ENCODE measurements at regions of chr7 and their contacts with region 1.

Region 1: GRCh38 chr7:20598459-20599309 is 16.8 kb upstream of the ABCB5 start:
- DNase-seq: peak in 1 of 2 experiments; percentile 53
- H3K4me3 ChIP-seq: no peak overlapping the region
- H3K4me3 Mint-ChIP-seq: no peak overlapping the region
- H3K27ac Mint-ChIP-seq: no peak overlapping the region
- H3K4me1 ChIP-seq: no peaks in the 10 kb centered on the region
- H3K4me1 Mint-ChIP-seq: peaks cover 5% of the 10 kb centered on the region
- H3K27me3 ChIP-seq: no peaks in the 10 kb centered on the region; the same call in 1 of the 2 replicates
- H3K27me3 Mint-ChIP-seq: no peaks in the 10 kb centered on the region
- CTCF ChIP-seq: peak; percentile 68 to 69

Region 2: DNA sequence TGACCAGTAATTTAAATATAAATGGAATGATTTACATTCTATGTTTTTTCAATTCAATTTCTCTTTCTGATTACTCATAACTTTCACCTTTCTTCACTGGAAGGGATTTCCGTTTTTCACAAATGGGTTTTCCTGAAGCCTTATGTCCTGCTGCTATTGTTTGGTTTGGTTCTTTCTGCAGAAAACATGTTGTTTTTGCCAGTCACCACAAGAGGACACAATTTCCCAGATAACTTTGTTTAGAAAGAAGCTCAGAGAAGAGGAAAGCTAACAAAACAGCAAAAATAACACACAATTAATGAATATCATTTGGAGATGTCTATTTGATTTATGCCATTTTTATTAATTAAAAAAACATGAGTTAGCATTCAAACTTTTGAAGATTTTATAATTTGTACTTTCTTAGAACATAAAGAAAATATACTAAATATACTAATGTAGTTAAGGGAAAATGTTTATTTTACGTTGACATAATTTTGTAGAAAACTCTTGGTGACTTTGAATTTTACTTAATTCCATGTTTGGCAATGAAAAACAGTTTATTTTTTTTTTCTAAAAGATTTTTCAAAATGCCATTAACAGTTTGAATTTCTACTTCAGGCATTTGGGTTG is 1476.6 kb before region 1 on chr7:
- CTCF ChIA-PET with region 1: no interaction called
- POLR2A ChIA-PET with region 1: no interaction called
- intact Hi-C with region 1: loop called (anchors 5 kb)
- DNase-seq: peak in 1 of 2 experiments; percentile 12
- H3K4me3 ChIP-seq: no peak overlapping the region
- H3K4me3 Mint-ChIP-seq: no peak overlapping the region
- H3K27ac Mint-ChIP-seq: no peak overlapping the region
- H3K4me1 ChIP-seq: no peaks in the 10 kb centered on the region; the same call in 1 of the 2 replicates
- H3K4me1 Mint-ChIP-seq: no peaks in the 10 kb centered on the region
- H3K27me3 ChIP-seq: no peaks in the 10 kb centered on the region
- H3K27me3 Mint-ChIP-seq: peaks cover 10% of the 10 kb centered on the region
- CTCF ChIP-seq: peak; percentile 50 to 68

Region 3: DNA sequence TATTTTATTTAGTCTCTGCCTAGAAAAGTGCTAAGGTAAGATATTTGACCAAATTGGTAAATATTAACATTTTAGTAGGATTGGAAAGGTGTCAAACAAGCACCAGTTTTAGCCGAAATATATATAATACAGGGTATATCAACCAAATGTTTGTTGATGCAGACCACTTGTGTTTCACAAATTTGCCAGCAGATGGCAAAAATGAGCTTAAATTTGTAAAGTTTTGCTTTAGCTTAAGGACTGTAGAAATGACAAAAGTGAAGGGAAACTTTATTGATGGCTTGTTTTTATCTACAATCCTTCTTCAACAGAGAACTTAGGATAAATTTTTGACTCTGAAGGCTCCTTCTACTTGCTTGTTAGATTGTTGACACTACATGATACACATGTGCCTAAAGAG is 885.0 kb before region 1 on chr7:
- CTCF ChIA-PET with region 1: interaction called, 106 read pairs
- POLR2A ChIA-PET with region 1: no interaction called
- intact Hi-C with region 1: loop called (anchors 1 kb)
- DNase-seq: peak in 1 of 2 experiments; percentile 55
- H3K4me3 ChIP-seq: no peak overlapping the region
- H3K4me3 Mint-ChIP-seq: no peak overlapping the region
- H3K27ac Mint-ChIP-seq: no peak overlapping the region
- H3K4me1 ChIP-seq: peaks cover 7% of the 10 kb centered on the region; the same call in 1 of the 2 replicates
- H3K4me1 Mint-ChIP-seq: peaks cover 14% of the 10 kb centered on the region
- H3K27me3 ChIP-seq: no peaks in the 10 kb centered on the region
- H3K27me3 Mint-ChIP-seq: no peaks in the 10 kb centered on the region
- CTCF ChIP-seq: peak; percentile 59 to 61

Region 4: DNA sequence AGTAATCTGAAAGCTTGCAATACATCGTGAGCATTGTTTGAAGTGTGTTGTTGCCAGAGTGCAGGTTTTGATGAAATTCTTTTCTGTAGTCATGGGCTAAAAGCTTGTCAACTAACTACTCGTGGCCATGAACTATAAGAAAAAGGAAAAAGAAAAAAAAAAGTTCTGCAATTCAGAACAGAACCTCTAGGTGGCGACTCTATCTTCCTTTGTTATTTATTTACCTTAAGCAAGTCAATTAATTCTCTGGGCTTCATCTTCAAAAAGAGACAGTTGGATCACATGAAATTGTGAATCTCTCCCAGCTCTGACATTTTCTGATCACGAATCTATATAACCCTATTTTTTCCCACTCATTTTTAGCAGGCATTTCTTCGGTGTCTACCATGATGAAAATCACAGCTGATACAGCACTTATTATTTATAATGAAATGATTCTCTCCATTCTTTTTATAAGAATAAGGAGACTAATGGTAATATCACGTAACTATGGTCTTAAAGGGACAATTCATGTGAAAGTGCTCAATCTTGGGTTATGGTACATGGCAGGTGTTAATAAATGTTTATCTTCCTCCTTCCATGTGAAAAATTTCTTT is 844.1 kb before region 1 on chr7:
- CTCF ChIA-PET with region 1: no interaction called
- POLR2A ChIA-PET with region 1: no interaction called
- intact Hi-C with region 1: loop called (anchors 2 kb)
- DNase-seq: peak in 1 of 2 experiments; percentile 52
- H3K4me3 ChIP-seq: no peak overlapping the region
- H3K4me3 Mint-ChIP-seq: no peak overlapping the region
- H3K27ac Mint-ChIP-seq: no peak overlapping the region
- H3K4me1 ChIP-seq: peaks cover 8% of the 10 kb centered on the region; the same call in 1 of the 2 replicates
- H3K4me1 Mint-ChIP-seq: peaks cover 6% of the 10 kb centered on the region
- H3K27me3 ChIP-seq: no peaks in the 10 kb centered on the region
- H3K27me3 Mint-ChIP-seq: no peaks in the 10 kb centered on the region
- CTCF ChIP-seq: peak; percentile 65 to 78

Region 5: GRCh38 chr7:20158684-20159083 is 440.0 kb before region 1 on chr7:
- CTCF ChIA-PET with region 1: no interaction called
- POLR2A ChIA-PET with region 1: no interaction called
- intact Hi-C with region 1: loop called (anchors 5 kb)
- DNase-seq: peak in 1 of 2 experiments; percentile 10
- H3K4me3 ChIP-seq: no peak overlapping the region
- H3K4me3 Mint-ChIP-seq: peak overlapping the region; percentile 25
- H3K27ac Mint-ChIP-seq: peak overlapping the region; percentile 66
- H3K4me1 ChIP-seq: peaks cover 15% of the 10 kb centered on the region; the same call in 1 of the 2 replicates
- H3K4me1 Mint-ChIP-seq: peaks cover 16% of the 10 kb centered on the region
- H3K27me3 ChIP-seq: no peaks in the 10 kb centered on the region
- H3K27me3 Mint-ChIP-seq: no peaks in the 10 kb centered on the region
- CTCF ChIP-seq: no peak

Region 6: GRCh38 chr7:20330240-20330927 is 268.3 kb before region 1 on chr7 and contains the start of gene ITGB8:
- CTCF ChIA-PET with region 1: interaction called, 10 read pairs
- POLR2A ChIA-PET with region 1: no interaction called
- intact Hi-C with region 1: loop called (anchors 2 kb)
- DNase-seq: peak; percentile 76 to 77
- H3K4me3 ChIP-seq: peak within 1 kb of the TSS; percentile 91
- H3K4me3 Mint-ChIP-seq: peak within 1 kb of the TSS; percentile 85
- H3K27ac Mint-ChIP-seq: peak within 1 kb of the TSS; percentile 88
- H3K4me1 ChIP-seq: peaks cover 4% of the 10 kb centered on the region; the same call in 1 of the 2 replicates
- H3K4me1 Mint-ChIP-seq: no peaks in the 10 kb centered on the region
- H3K27me3 ChIP-seq: no peaks in the 10 kb centered on the region
- H3K27me3 Mint-ChIP-seq: no peaks in the 10 kb centered on the region
- CTCF ChIP-seq: no peak
- total RNA-seq, gene ITGB8: 3.2 and 4.6 TPM in 2 replicates

Region 7: DNA sequence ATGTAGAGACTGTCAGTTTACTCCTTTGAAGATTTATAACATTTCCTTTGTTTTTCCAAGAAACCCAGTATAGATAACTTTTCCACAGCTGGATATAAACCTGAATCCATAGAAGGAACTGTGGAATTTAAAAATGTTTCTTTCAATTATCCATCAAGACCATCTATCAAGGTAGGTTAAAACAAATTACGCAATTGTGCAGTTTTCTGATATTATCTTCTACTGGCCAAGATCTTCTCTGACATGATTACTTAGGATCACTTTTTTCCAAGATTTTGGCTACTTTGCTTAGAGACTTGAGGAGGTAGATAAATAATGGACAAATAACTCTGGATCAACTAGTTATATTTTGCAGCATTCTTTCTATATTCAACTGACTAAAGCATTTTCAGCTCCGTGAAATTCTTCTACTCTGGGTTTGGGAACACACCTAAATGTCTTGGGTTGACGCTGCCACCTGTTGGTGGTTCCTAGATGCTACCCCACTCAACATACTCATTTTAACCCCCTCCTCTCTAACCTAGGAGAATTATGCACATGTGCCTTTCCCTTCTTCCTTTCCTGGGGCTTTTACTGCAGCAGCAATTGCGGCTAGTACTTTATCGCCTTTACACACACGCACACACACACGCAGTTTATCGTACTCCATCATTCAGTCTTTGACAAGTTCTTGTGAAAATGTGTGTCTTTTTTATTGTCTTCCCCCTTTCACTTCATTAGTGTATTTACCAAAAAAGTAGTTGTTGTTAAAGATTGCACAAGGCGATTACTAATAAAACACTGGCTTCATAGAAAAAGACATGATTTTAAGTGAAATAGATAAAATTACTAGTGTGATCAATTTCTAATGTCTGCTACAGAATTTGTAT is 49.5 kb after region 1 on chr7:
- CTCF ChIA-PET with region 1: no interaction called
- POLR2A ChIA-PET with region 1: no interaction called
- intact Hi-C with region 1: loop called (anchors 2 kb)
- DNase-seq: peak; percentile 62 to 64
- H3K4me3 ChIP-seq: no peak overlapping the region
- H3K4me3 Mint-ChIP-seq: no peak overlapping the region
- H3K27ac Mint-ChIP-seq: no peak overlapping the region
- H3K4me1 ChIP-seq: no peaks in the 10 kb centered on the region
- H3K4me1 Mint-ChIP-seq: peaks cover 7% of the 10 kb centered on the region
- H3K27me3 ChIP-seq: no peaks in the 10 kb centered on the region
- H3K27me3 Mint-ChIP-seq: no peaks in the 10 kb centered on the region
- CTCF ChIP-seq: peak; percentile 60 to 67